ENCODE measurements at regions of chr14 and their contacts with region 1.

Region 1: GRCh38 chr14:64294672-64295413 is 672 bp upstream of the ESR2 start:
- DNase-seq: peak; percentile 93
- ATAC-seq: peak; percentile 90
- H3K4me3 ChIP-seq: peak overlapping the region; percentile 56 to 90 (median 61)
- H3K4me3 Mint-ChIP-seq: peak overlapping the region; percentile 95
- H3K27ac ChIP-seq: peak overlapping the region; percentile 26 to 67
- H3K27ac Mint-ChIP-seq: peak overlapping the region; percentile 87
- H3K4me1 ChIP-seq: peaks cover 14 to 19% of the 10 kb centered on the region in 2 donors
- H3K4me1 Mint-ChIP-seq: peaks cover 30% of the 10 kb centered on the region
- H3K27me3 ChIP-seq: no peaks in the 10 kb centered on the region
- H3K27me3 Mint-ChIP-seq: no peaks in the 10 kb centered on the region
- CTCF ChIP-seq: peak; percentile 87

Region 2: GRCh38 chr14:63800651-63801375 is 494.0 kb before region 1 on chr14:
- CTCF ChIA-PET with region 1: interaction called, 39 read pairs
- POLR2A ChIA-PET with region 1: no interaction called
- intact Hi-C with region 1: loop called (anchors 1 kb)
- DNase-seq: no peak
- ATAC-seq: no peak
- H3K4me3 ChIP-seq: no peak overlapping the region
- H3K4me3 Mint-ChIP-seq: no peak overlapping the region
- H3K27ac ChIP-seq: no peak overlapping the region
- H3K27ac Mint-ChIP-seq: no peak overlapping the region
- H3K4me1 ChIP-seq: no peaks in the 10 kb centered on the region
- H3K4me1 Mint-ChIP-seq: peaks cover 3% of the 10 kb centered on the region
- H3K27me3 ChIP-seq: no peaks in the 10 kb centered on the region
- H3K27me3 Mint-ChIP-seq: no peaks in the 10 kb centered on the region
- CTCF ChIP-seq: no peak

Region 3: DNA sequence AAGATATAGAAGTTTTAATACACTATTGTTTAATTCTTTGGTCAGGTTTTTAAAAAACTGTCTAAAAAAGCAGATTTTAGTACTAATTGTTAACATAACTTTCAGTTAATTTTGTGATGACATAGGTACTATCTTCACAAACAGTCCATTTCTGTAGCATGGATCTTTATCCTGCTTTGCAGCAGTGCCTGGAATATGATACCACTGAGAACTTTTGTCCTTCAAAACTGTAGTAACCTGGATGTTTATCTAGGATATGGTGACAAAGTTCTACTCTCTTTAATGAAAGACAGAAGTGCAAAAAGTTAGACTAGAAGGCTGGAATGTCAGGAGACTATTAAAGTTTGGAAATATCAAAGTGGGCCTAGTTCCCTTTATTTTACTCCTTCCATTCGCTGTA is 282.1 kb before region 1 on chr14:
- CTCF ChIA-PET with region 1: interaction called, 63 read pairs
- POLR2A ChIA-PET with region 1: no interaction called
- intact Hi-C with region 1: loop called (anchors 2 kb)
- DNase-seq: no peak
- ATAC-seq: no peak
- H3K4me3 ChIP-seq: no peak overlapping the region
- H3K4me3 Mint-ChIP-seq: no peak overlapping the region
- H3K27ac ChIP-seq: no peak overlapping the region
- H3K27ac Mint-ChIP-seq: no peak overlapping the region
- H3K4me1 ChIP-seq: no peaks in the 10 kb centered on the region
- H3K4me1 Mint-ChIP-seq: no peaks in the 10 kb centered on the region
- H3K27me3 ChIP-seq: no peaks in the 10 kb centered on the region
- H3K27me3 Mint-ChIP-seq: no peaks in the 10 kb centered on the region
- CTCF ChIP-seq: no peak

Region 4: DNA sequence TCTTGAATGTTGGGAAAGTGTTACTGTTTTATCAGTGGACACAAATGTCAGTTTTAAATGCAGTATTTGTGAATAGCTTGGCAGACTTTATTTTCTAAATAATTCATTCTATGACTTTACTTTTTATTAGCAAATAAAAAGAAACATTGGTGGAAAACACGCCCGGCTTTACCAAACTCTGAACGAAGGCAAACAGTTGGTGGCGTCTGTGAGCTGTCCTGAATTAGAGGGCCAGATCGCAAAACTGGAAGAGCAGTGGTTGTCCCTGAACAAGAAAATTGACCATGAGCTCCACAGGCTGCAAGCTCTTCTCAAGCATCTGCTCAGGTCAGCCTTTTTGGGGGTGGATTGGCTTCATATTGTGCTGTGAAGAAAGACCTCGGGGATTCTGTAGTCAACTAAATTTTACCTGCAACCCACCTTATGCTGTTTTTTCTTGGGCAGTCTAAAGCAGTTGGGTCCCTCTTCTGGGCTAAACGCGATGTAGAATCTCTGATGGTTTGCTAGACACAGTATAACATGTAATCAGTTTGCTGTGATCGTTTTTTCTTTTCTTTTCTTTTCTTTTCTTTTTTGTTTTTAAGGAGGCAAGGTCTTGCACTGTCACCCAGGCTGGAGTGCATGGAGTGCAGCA is 157.1 kb before region 1 on chr14:
- CTCF ChIA-PET with region 1: interaction called, 120 read pairs
- POLR2A ChIA-PET with region 1: no interaction called
- intact Hi-C with region 1: loop called (anchors 1 kb)
- DNase-seq: peak; percentile 33
- ATAC-seq: no peak
- H3K4me3 ChIP-seq: no peak overlapping the region
- H3K4me3 Mint-ChIP-seq: no peak overlapping the region
- H3K27ac ChIP-seq: no peak overlapping the region
- H3K27ac Mint-ChIP-seq: no peak overlapping the region
- H3K4me1 ChIP-seq: no peaks in the 10 kb centered on the region
- H3K4me1 Mint-ChIP-seq: no peaks in the 10 kb centered on the region
- H3K27me3 ChIP-seq: no peaks in the 10 kb centered on the region
- H3K27me3 Mint-ChIP-seq: no peaks in the 10 kb centered on the region
- CTCF ChIP-seq: no peak

Region 5: GRCh38 chr14:64170181-64170580 is 124.7 kb before region 1 on chr14:
- CTCF ChIA-PET with region 1: interaction called, 44 read pairs
- POLR2A ChIA-PET with region 1: no interaction called
- intact Hi-C with region 1: no loop called
- DNase-seq: peak; percentile 71
- ATAC-seq: peak; percentile 92
- H3K4me3 ChIP-seq: no peak overlapping the region
- H3K4me3 Mint-ChIP-seq: peak overlapping the region; percentile 32
- H3K27ac ChIP-seq: no peak overlapping the region
- H3K27ac Mint-ChIP-seq: peak overlapping the region; percentile 54
- H3K4me1 ChIP-seq: peaks cover 6 to 7% of the 10 kb centered on the region in 2 donors
- H3K4me1 Mint-ChIP-seq: peaks cover 15% of the 10 kb centered on the region
- H3K27me3 ChIP-seq: no peaks in the 10 kb centered on the region
- H3K27me3 Mint-ChIP-seq: no peaks in the 10 kb centered on the region
- CTCF ChIP-seq: no peak

Region 6: GRCh38 chr14:64218344-64219240 is 76.3 kb before region 1 on chr14:
- CTCF ChIA-PET with region 1: interaction called, 24 read pairs
- POLR2A ChIA-PET with region 1: interaction called, 3 read pairs
- intact Hi-C with region 1: no loop called
- DNase-seq: peak; percentile 30
- ATAC-seq: no peak
- H3K4me3 ChIP-seq: no peak overlapping the region
- H3K4me3 Mint-ChIP-seq: peak overlapping the region; percentile 61
- H3K27ac ChIP-seq: peak overlapping the region in 1 of 2 donors; percentile 19
- H3K27ac Mint-ChIP-seq: peak overlapping the region; percentile 78
- H3K4me1 ChIP-seq: peaks cover 57 to 61% of the 10 kb centered on the region in 2 donors
- H3K4me1 Mint-ChIP-seq: peaks cover 64% of the 10 kb centered on the region
- H3K27me3 ChIP-seq: no peaks in the 10 kb centered on the region
- H3K27me3 Mint-ChIP-seq: no peaks in the 10 kb centered on the region
- CTCF ChIP-seq: no peak

Region 7: DNA sequence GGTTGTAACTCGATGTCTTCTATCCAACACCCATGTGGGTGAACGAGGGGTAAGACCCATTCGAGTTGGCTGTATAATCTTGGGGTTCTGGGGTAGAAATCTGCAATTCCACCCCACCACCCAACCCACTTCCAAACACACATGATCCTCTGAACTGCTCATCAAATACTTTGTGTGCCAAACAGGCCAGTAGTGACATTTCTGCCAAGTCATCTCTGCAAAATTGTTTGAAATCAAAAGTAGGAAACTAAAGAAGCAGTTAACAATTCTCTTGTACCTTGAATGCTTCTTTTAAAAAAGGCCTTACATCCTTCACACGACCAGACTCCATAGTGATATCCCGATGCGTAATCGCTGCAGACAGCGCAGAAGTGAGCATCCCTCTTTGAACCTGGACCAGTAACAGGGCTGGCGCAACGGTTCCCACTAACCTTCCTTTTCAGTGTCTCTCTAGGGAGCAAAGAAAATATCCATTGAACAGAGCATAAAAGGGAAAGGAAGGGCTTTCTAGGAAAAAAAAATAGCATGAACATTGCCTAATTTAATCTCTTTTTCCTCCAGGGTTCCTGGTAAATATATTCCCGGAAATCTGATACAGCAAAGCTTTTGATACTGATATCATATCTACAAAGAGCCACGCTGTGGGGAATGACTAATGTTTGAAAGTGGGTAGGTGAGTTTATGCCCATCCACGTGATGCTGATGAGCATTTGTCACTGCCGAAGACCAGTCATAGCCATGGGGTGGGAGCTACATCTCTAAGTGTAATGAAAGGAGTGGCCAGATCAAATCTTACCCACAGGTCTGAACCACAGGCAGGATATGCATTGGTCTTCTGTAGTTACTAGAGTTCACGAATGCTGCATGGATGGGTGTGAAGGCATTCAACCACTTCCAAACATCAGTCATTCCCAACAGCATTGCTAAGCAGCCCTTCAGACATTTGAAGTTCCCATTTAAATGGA is 14.9 kb before region 1 on chr14:
- CTCF ChIA-PET with region 1: interaction called, 13 read pairs
- POLR2A ChIA-PET with region 1: no interaction called
- intact Hi-C with region 1: no loop called
- DNase-seq: no peak
- ATAC-seq: no peak
- H3K4me3 ChIP-seq: no peak overlapping the region
- H3K4me3 Mint-ChIP-seq: no peak overlapping the region
- H3K27ac ChIP-seq: no peak overlapping the region
- H3K27ac Mint-ChIP-seq: no peak overlapping the region
- H3K4me1 ChIP-seq: peaks cover 0 to 3% of the 10 kb centered on the region in 2 donors
- H3K4me1 Mint-ChIP-seq: peaks cover 11% of the 10 kb centered on the region
- H3K27me3 ChIP-seq: no peaks in the 10 kb centered on the region
- H3K27me3 Mint-ChIP-seq: no peaks in the 10 kb centered on the region
- CTCF ChIP-seq: no peak

Measured in B cell (primary cell).